ENCODE measurements at regions of chr12 and their contacts with region 1.

Region 1: DNA sequence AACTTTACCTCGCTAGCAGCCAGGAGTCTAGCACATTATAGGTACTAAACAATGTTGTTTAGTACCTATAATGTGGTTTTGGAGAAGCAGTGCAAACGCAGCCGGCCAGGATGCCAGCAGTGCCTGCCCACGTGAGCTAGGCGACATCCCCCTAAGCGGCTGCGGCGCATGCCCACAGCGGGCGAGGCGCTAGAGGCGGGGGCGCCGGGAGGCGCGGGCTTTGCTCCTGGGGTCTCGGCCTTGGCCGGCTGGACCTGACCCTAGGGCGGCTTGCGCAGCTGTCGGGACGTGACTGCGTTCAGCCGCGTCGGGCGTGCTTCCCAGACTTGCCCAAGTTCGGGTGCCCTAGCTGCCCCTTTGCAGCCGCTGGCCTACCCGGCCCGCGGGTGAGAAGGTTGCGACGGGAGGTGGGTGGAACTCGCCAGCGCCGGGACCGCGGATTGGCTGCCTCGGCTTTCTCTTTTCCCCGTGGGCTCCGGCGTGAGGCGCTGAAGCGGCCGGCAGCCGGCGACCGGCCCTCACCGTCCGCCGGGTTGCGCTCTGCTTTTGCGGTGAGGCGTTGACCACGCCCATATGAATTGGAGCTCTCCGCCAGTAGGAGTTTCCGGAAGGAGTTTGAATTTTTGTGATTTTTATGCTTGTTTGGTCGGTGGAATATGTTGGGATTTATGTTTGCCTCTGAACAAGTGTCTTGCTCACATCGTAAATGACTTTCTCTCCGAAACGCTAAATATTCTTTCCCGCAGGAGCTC is at the start of gene TMEM19:
- DNase-seq: peak; percentile 79
- ATAC-seq: peak; percentile 97
- H3K4me3 ChIP-seq: peak within 1 kb of the TSS; percentile 73 to 79 (median 73)
- H3K27ac ChIP-seq: peak within 1 kb of the TSS; percentile 93
- H3K4me1 ChIP-seq: peaks cover 46% of the 10 kb centered on the region
- H3K27me3 ChIP-seq: no peaks in the 10 kb centered on the region
- CTCF ChIP-seq: peak; percentile 59
- EP300 ChIP-seq: peak; percentile 15 to 54; a peak in 1 of 4 replicates
- POLR2A ChIP-seq: peak; percentile 81 to 88
- RAD21 ChIP-seq: peak; percentile 57
- total RNA-seq, gene TMEM19: 21.9 and 22.5 TPM in 2 replicates

Region 2: GRCh38 chr12:71731751-71732712 is 45.9 kb after region 1 on chr12:
- CTCF ChIA-PET with region 1: no interaction called
- POLR2A ChIA-PET with region 1: interaction called, 19 read pairs
- in situ Hi-C with region 1: no loop called
- intact Hi-C with region 1: loop called (anchors 2 kb)
- DNase-seq: peak; percentile 79
- ATAC-seq: peak; percentile 99
- H3K4me3 ChIP-seq: peak overlapping the region; percentile 49 to 72 (median 62)
- H3K27ac ChIP-seq: peak overlapping the region; percentile 62
- H3K4me1 ChIP-seq: peaks cover 19% of the 10 kb centered on the region
- H3K27me3 ChIP-seq: no peaks in the 10 kb centered on the region
- CTCF ChIP-seq: peak; percentile 73
- EP300 ChIP-seq: peak in 1 of 2 experiments; percentile 5; a peak in 1 of 4 replicates
- POLR2A ChIP-seq: peak; percentile 52 to 53; a peak in 3 of 4 replicates
- RAD21 ChIP-seq: peak; percentile 33; the same call in 1 of the 2 replicates

Region 3: DNA sequence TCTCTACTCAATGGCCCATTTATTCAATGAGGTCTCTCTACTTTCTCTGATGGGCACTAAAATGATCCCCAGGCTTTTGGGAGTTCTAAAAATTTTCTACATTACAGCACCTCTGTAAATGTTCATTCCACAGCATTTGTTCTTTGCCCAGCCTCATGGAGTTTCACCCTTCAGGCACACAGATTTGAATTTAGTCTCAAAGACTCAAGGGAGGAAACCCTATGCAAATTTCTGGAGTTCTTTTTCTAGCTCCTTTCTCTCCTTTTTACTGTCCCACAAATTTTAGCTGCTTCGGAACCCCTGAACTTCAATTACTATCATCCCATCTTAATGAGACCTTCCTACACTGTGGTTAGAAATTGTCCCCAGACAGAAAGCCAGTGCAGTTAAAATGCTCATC is 51.1 kb after region 1 on chr12:
- CTCF ChIA-PET with region 1: no interaction called
- POLR2A ChIA-PET with region 1: interaction called, 19 read pairs
- in situ Hi-C with region 1: no loop called
- intact Hi-C with region 1: loop called (anchors 2 kb)
- DNase-seq: no peak
- ATAC-seq: no peak
- H3K4me3 ChIP-seq: no peak overlapping the region
- H3K27ac ChIP-seq: no peak overlapping the region
- H3K4me1 ChIP-seq: peaks cover 6% of the 10 kb centered on the region
- H3K27me3 ChIP-seq: no peaks in the 10 kb centered on the region
- CTCF ChIP-seq: no peak
- EP300 ChIP-seq: no peak
- POLR2A ChIP-seq: no peak
- RAD21 ChIP-seq: no peak

Region 4: GRCh38 chr12:71754461-71755145 is 68.5 kb after region 1 on chr12 and contains the start of gene RAB21:
- CTCF ChIA-PET with region 1: no interaction called
- POLR2A ChIA-PET with region 1: interaction called, 14 read pairs
- in situ Hi-C with region 1: no loop called
- intact Hi-C with region 1: no loop called
- DNase-seq: peak; percentile 94
- ATAC-seq: peak; percentile 99
- H3K4me3 ChIP-seq: peak within 1 kb of the TSS; percentile 92 to 99 (median 97)
- H3K27ac ChIP-seq: peak within 1 kb of the TSS; percentile 83
- H3K4me1 ChIP-seq: peaks cover 40% of the 10 kb centered on the region
- H3K27me3 ChIP-seq: no peaks in the 10 kb centered on the region; a peak in 2 of 5 replicates
- CTCF ChIP-seq: peak; percentile 32
- EP300 ChIP-seq: 0 out of 4 replicates have a peak, but pooled peaks of 1 of the 2 experiments have one; percentile 7
- POLR2A ChIP-seq: peak; percentile 87 to 94
- RAD21 ChIP-seq: no peak; the same call in 1 of the 2 replicates
- total RNA-seq, gene RAB21: 50.9 and 61.4 TPM in 2 replicates

Measured in HepG2 (cell line).